Cardiac septum (tissue), 1 donor: ENCODE measurements at regions of chr15 and their contacts with region 1.

Region 1: DNA sequence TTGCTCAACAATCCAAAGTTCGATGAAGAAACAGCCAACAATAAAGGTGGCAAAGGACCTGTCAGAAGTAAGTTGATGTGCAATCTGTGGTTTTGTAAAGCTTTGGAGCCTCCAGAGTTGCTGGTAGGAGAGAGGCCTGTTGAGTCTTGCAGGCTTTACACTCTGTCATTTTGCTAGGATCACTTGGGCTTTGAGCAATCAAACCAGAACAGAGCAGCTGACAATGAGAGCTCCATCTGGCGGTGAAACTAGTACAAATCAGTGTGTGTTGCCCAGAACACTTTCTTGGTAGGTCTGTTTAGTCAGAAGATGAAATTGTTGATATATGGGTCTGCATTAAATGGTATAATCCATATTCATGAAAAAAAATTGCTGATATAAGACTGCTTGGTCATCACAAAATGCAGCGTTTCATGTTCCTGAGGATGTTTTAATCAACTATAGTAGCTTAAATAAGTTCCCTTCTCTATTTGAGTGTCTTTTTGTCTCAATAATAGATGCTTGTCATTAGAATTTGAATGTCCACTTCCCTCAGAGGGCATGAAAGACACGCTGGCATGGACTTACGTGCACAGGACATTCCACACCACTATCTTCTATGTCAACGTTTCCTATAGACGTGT is 25.7 kb downstream of the TMOD2 start:
- DNase-seq: no peak

Region 2: DNA sequence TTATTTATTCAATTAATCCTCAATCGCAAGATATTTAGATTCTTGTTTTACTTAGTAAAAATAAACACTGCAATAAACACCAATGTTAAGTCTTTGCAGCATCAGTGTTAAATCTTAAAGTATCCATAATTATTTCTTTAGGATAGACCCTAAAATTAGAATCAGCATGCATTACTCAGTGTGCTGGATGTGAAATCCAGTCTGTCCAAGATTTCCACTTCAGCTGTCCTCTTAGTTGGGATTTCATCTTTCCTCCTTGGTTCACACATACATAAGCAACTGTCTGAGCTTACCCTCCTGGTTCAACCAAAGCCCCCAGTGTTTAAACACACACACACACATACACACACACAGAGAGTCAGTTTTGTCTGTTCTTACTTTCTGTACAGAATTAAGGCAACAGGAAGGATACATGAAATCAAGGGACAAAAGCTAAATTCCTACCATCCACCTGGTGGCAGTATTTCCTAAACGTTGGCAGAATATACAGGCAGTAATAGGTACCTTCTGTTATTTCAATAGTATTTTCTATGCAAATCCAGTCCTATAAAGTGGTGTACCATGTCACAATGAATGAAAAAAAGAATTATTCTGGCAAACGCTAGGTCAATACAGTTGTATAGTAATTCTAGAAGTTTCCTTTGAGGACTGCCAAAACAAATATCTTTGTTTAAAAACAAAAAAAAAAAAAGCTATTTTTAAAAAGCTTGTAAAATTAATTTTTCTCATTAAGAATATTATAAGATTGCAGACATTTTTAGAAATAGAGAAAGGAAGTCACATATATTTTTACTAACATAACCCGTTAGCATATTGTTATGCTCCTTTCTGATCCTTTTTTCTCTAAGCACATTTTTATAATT is 127.2 kb before region 1 on chr15:
- intact Hi-C with region 1: loop called (anchors 2 kb)
- DNase-seq: no peak

Region 3: DNA sequence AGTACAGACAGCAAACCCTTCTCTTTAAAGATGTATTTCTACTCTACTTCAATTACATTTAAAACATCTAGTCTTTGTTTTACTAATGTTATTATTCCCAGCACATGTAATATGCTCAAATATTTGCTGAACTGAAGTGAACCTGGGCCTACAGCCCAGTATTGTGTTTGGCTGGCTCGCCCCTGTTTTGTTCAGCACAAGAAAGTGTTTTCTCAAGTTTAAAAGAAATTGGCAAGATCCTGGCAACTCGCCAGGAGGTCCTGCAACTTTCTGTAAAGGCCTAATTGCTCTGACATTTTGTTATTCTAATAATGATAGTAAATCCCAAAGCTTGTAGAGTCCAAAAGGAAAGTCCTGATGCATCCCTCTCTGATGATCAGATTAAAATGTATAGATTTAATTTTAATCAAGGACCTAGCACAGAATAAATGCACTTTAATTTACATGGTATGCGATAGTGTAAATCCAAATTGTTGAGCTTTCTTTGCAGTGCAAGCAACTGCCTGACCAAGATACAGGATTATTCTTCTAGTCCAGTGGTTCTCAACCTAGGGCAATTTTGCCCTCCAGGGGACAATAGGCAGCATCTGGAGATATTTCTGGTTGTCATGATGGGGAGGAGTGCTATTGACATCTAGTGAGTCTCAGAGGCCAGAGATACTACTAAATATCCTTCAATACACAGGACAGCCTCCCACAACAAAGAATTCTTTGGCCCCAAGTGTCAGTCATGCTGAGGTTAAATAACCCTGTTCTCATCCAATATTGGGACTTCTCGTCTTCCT is 16.6 kb after region 1 on chr15:
- intact Hi-C with region 1: no loop called
- DNase-seq: no peak

Region 4: DNA sequence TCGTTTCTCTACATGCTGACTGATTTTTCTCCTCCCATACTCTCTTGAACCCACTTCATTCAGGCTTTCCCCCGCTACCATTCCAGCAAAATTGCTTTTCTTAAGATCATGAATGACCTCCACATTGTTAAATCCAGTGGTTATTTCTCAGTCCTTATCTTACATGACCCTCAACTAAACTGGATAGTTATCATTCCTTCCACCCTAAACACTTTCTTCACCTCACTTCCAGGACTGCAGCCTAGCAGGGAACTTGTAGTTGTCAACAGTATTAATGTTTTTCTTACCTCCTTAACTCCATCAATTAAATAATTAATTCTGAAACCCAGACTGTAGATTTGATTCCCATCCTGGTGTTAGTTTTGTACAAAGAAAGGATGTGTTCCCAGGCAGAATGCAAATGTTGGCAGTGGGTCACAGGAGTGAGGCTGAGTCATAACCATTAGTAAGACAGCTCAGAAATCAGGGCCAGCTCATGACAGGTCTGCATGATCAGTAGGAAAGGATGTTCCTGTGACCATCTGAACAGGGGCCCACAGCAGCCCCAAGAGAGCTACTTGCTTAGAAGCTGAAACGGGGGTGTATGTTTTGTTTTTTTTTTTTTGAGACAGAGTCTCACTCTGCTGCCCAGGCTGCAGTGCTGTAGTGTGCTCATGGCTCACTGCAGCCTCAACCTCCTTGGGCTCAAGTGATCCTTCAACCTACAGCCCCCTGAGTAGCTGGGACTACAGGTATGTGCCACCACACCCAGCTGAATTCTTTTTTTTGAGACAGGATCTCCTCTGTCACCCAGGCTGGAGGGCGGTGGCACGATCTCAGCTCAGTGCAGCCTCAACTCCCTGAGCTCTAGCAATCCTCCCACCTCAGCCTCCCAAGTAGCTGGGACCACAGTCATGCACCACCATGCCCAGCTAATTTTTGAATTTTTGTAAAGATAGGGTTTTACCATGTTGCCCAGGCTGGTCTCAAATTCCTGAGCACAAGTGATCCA is 326.4 kb after region 1 on chr15:
- intact Hi-C with region 1: no loop called
- DNase-seq: no peak